HCT116 (cell line): ENCODE measurements at regions of chr10 and their contacts with region 1.

Region 1: GRCh38 chr10:112471878-112472487 is 25.0 kb downstream of the VTI1A start:
- DNase-seq: peak; percentile 72
- ATAC-seq: peak; percentile 81
- H3K4me3 ChIP-seq: no peak overlapping the region
- H3K27ac ChIP-seq: peak overlapping the region; percentile 32
- H3K4me1 ChIP-seq: peaks cover 30 to 42% of the 10 kb centered on the region in 2 experiments
- H3K27me3 ChIP-seq: no peaks in the 10 kb centered on the region
- CTCF ChIP-seq: peak; percentile 72 to 93 (median 84)
- POLR2A ChIP-seq: no peak
- RAD21 ChIP-seq: peak; percentile 96

Region 2: DNA sequence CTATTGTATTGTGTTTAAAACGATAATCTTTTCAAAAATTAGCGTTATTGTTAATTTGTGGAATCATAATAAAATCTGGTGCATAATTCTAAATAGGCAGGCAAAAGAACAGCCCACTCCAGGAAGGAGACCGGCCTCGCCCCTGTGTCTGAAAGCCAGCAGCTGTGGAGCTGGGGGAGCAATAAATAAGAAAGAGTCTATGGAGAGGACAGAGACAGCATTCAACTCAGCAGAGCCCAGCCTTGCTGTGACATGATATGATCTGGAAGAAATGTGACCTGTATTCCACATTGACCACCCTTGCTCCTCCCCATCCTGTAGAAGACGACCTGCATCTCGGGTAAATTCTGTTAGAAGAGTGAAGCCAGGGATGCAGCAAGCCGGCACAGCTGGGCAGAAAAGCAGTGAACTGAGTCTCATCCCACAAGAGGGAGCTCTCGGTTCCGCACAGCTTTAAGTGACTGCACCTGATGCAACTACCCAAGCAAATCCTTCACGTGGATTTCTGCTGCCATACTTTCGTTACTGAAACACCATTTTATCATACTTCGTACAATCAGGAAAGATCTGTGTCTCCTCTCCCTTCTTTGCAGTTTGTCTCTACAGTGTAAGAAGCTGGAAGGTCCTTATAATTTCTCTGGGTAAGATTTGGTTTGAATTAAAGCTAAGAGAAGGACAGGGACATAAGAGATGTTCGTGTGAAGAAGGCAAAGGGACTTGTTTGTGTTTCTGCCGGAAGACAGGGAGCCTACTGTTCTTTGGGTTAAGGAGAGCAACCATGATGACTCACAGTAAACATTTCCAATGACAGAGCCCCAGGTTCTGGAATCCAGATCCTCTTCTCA is 715.5 kb before region 1 on chr10:
- CTCF ChIA-PET with region 1: no interaction called
- POLR2A ChIA-PET with region 1: no interaction called
- RAD21 ChIA-PET with region 1: no interaction called
- intact Hi-C with region 1: loop called (anchors 10 kb)
- DNase-seq: peak; percentile 79
- ATAC-seq: peak; percentile 98
- H3K4me3 ChIP-seq: no peak overlapping the region
- H3K27ac ChIP-seq: no peak overlapping the region
- H3K4me1 ChIP-seq: peaks cover 0 to 7% of the 10 kb centered on the region in 2 experiments; a peak in 2 of 4 replicates
- H3K27me3 ChIP-seq: peaks cover 8% of the 10 kb centered on the region; the same call in 1 of the 2 replicates
- CTCF ChIP-seq: peak; percentile 63 to 81 (median 70)
- POLR2A ChIP-seq: no peak
- RAD21 ChIP-seq: peak; percentile 76

Region 3: GRCh38 chr10:112314822-112315474 is 157.0 kb before region 1 on chr10:
- CTCF ChIA-PET with region 1: interaction called, 19 read pairs
- POLR2A ChIA-PET with region 1: no interaction called
- RAD21 ChIA-PET with region 1: interaction called in 1 of 2 experiments, 3 read pairs
- intact Hi-C with region 1: no loop called
- DNase-seq: peak; percentile 72
- ATAC-seq: peak; percentile 95
- H3K4me3 ChIP-seq: no peak overlapping the region
- H3K27ac ChIP-seq: no peak overlapping the region
- H3K4me1 ChIP-seq: peaks cover 0 to 18% of the 10 kb centered on the region in 2 experiments; a peak in 1 of 4 replicates
- H3K27me3 ChIP-seq: no peaks in the 10 kb centered on the region
- CTCF ChIP-seq: peak; percentile 87 to 99 (median 98)
- POLR2A ChIP-seq: no peak
- RAD21 ChIP-seq: peak; percentile 96

Region 4: GRCh38 chr10:112490545-112490944 is 18.6 kb after region 1 on chr10:
- CTCF ChIA-PET with region 1: interaction called, 23 read pairs
- POLR2A ChIA-PET with region 1: no interaction called
- RAD21 ChIA-PET with region 1: no interaction called
- intact Hi-C with region 1: no loop called
- DNase-seq: peak; percentile 97
- ATAC-seq: peak; percentile 80
- H3K4me3 ChIP-seq: peak overlapping the region in 1 of 2 experiments; percentile 5; a peak in 1 of 4 replicates
- H3K27ac ChIP-seq: peak overlapping the region; percentile 86
- H3K4me1 ChIP-seq: peaks cover 94 to 99% of the 10 kb centered on the region in 2 experiments
- H3K27me3 ChIP-seq: no peaks in the 10 kb centered on the region
- CTCF ChIP-seq: no peak
- POLR2A ChIP-seq: no peak
- RAD21 ChIP-seq: no peak; the same call in 1 of the 2 replicates

Region 5: GRCh38 chr10:112811740-112812551 is 340.0 kb after region 1 on chr10:
- CTCF ChIA-PET with region 1: interaction called, 3 read pairs
- POLR2A ChIA-PET with region 1: no interaction called
- RAD21 ChIA-PET with region 1: interaction called in 1 of 2 experiments, 4 read pairs
- intact Hi-C with region 1: loop called (anchors 5 kb)
- DNase-seq: peak; percentile 91
- ATAC-seq: peak; percentile 84
- H3K4me3 ChIP-seq: peak overlapping the region; percentile 8 to 18; a peak in 2 of 4 replicates
- H3K27ac ChIP-seq: peak overlapping the region; percentile 78
- H3K4me1 ChIP-seq: peaks cover 77 to 87% of the 10 kb centered on the region in 2 experiments
- H3K27me3 ChIP-seq: no peaks in the 10 kb centered on the region
- CTCF ChIP-seq: no peak
- POLR2A ChIP-seq: no peak
- RAD21 ChIP-seq: peak; percentile 56

Region 6: GRCh38 chr10:113454341-113455061 is 982.5 kb after region 1 on chr10:
- CTCF ChIA-PET with region 1: no interaction called
- POLR2A ChIA-PET with region 1: no interaction called
- RAD21 ChIA-PET with region 1: no interaction called
- intact Hi-C with region 1: loop called (anchors 2 kb)
- DNase-seq: peak; percentile 31
- ATAC-seq: peak; percentile 93
- H3K4me3 ChIP-seq: peak overlapping the region in 1 of 2 experiments; percentile 10; a peak in 1 of 4 replicates
- H3K27ac ChIP-seq: no peak overlapping the region
- H3K4me1 ChIP-seq: peaks cover 0 to 6% of the 10 kb centered on the region in 2 experiments; a peak in 1 of 4 replicates
- H3K27me3 ChIP-seq: peaks cover 32% of the 10 kb centered on the region
- CTCF ChIP-seq: peak; percentile 58 to 98 (median 96); a peak in 5 of 6 replicates
- POLR2A ChIP-seq: no peak
- RAD21 ChIP-seq: peak; percentile 90